B cell (primary cell): ENCODE measurements at regions of chr4 and their contacts with region 1.

Region 1: DNA sequence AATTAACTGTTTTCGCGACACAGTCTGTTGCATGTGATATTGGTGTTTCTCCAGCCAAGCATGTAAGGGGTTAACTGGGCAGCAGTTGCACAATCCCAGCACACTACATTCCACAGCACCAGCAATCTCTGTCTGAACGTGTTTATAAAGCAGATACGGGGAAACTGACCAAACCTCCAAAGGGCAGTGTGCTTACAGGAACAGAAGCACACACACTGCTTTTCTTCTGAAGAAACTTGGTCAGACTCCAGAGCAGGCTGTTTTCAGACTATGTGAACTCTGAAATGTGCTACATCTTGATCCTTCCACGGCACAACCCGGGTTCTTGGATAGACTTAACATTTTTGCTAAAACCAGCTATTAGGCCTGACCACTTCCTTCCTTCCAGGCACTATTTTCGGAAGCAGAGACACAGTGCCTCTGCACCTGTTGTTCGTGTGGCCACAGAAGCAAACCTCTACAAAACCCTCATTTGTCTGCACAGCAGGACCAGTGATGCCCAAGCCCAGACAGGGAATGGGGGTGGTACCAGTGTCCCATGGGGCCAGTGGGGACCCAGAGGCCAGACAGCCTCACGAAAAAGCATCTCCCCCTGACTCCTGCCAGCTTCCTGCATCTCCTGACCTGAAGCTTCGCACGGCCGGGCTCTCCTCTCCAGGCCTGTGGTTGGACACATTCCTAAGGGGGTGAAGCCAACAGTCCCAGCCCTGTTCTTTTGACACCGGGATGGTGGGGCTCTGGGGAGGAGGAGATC is 90.1 kb downstream of the IRF2 start:
- DNase-seq: peak; percentile 71
- ATAC-seq: peak; percentile 57
- H3K4me3 ChIP-seq: peak overlapping the region; percentile 30 to 59 (median 50)
- H3K4me3 Mint-ChIP-seq: peak overlapping the region; percentile 81
- H3K27ac ChIP-seq: peak overlapping the region; percentile 60 to 76
- H3K27ac Mint-ChIP-seq: peak overlapping the region; percentile 85
- H3K4me1 ChIP-seq: peaks cover 79 to 88% of the 10 kb centered on the region in 2 donors
- H3K4me1 Mint-ChIP-seq: peaks cover 85% of the 10 kb centered on the region
- H3K27me3 ChIP-seq: no peaks in the 10 kb centered on the region
- H3K27me3 Mint-ChIP-seq: no peaks in the 10 kb centered on the region
- CTCF ChIP-seq: no peak

Region 2: GRCh38 chr4:184282251-184282713 is 102.0 kb before region 1 on chr4:
- CTCF ChIA-PET with region 1: no interaction called
- POLR2A ChIA-PET with region 1: interaction called, 7 read pairs
- intact Hi-C with region 1: loop called (anchors 5 kb)
- DNase-seq: peak; percentile 62
- ATAC-seq: peak; percentile 72
- H3K4me3 ChIP-seq: no peak overlapping the region
- H3K4me3 Mint-ChIP-seq: peak overlapping the region; percentile 77
- H3K27ac ChIP-seq: peak overlapping the region; percentile 28 to 73
- H3K27ac Mint-ChIP-seq: peak overlapping the region; percentile 90
- H3K4me1 ChIP-seq: peaks cover 48% of the 10 kb centered on the region in 2 donors
- H3K4me1 Mint-ChIP-seq: peaks cover 58% of the 10 kb centered on the region
- H3K27me3 ChIP-seq: no peaks in the 10 kb centered on the region
- H3K27me3 Mint-ChIP-seq: no peaks in the 10 kb centered on the region
- CTCF ChIP-seq: peak; percentile 34

Region 3: DNA sequence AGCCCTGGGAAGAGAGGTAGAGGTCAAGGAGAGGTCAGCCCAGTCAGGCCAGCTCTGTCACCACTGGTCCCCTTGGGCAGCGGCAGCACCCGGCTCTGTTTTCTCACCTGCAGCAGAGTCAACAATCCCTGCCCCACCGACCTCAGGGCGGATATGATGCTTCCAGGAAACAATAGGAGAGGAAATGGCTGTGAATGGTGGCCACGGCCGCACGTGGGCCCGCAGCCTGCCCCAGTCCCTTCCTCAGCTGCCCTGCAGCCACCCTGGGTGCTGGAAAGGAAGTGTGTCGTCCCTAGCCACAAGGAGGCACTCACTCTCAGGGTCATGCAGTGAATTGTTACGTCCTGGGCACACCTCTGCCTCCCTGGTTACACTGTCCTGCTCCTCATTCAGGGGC is 74.1 kb before region 1 on chr4:
- CTCF ChIA-PET with region 1: interaction called, 7 read pairs
- POLR2A ChIA-PET with region 1: interaction called, 3 read pairs
- intact Hi-C with region 1: loop called (anchors 1 kb)
- DNase-seq: peak; percentile 71
- ATAC-seq: peak; percentile 21
- H3K4me3 ChIP-seq: no peak overlapping the region
- H3K4me3 Mint-ChIP-seq: peak overlapping the region; percentile 29
- H3K27ac ChIP-seq: no peak overlapping the region
- H3K27ac Mint-ChIP-seq: peak overlapping the region; percentile 56
- H3K4me1 ChIP-seq: peaks cover 46 to 48% of the 10 kb centered on the region in 2 donors
- H3K4me1 Mint-ChIP-seq: peaks cover 60% of the 10 kb centered on the region
- H3K27me3 ChIP-seq: no peaks in the 10 kb centered on the region
- H3K27me3 Mint-ChIP-seq: no peaks in the 10 kb centered on the region
- CTCF ChIP-seq: peak; percentile 58

Region 4: DNA sequence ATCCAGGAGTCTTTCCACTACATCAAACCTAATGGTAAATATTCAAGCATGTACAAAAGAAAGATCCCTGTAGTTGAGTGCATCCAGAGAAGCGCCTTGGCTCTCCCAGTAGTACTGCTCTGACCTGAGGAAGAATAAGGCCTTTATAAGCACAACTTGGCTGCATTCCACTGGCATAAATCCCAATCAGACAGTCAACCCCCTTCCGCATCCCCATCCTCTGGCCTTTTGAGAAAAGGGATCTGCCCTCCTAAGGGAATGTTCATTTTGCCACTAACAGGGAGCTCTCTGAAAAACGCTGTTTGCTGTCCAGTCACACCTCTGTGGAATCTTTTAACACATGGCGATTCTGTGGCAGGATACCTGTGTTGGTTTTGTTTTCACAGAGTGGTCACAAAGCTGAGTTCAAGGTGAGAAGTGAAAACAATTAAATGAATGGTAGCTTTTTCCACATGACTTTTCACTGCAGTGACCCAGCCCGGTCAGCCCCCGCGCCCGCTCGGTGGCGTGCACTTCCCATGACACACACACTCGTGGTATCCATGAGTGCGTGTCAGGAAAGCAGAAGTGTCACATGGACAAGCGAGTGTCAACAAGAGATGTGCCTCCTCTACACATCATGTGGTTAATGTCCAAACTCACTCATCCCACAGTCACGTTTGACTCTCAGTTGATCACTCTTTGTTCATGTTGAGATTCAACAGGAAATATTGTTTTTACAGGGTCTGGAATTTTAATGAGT is 54.4 kb before region 1 on chr4:
- CTCF ChIA-PET with region 1: interaction called, 13 read pairs
- POLR2A ChIA-PET with region 1: no interaction called
- intact Hi-C with region 1: loop called (anchors 2 kb)
- DNase-seq: peak; percentile 89
- ATAC-seq: peak; percentile 28
- H3K4me3 ChIP-seq: no peak overlapping the region
- H3K4me3 Mint-ChIP-seq: peak overlapping the region; percentile 75
- H3K27ac ChIP-seq: peak overlapping the region; percentile 89 to 91
- H3K27ac Mint-ChIP-seq: peak overlapping the region; percentile 96
- H3K4me1 ChIP-seq: peaks cover 63 to 65% of the 10 kb centered on the region in 2 donors
- H3K4me1 Mint-ChIP-seq: peaks cover 67% of the 10 kb centered on the region
- H3K27me3 ChIP-seq: no peaks in the 10 kb centered on the region
- H3K27me3 Mint-ChIP-seq: no peaks in the 10 kb centered on the region
- CTCF ChIP-seq: no peak

Region 5: GRCh38 chr4:184343502-184344177 is 40.6 kb before region 1 on chr4:
- CTCF ChIA-PET with region 1: interaction called, 5 read pairs
- POLR2A ChIA-PET with region 1: interaction called, 3 read pairs
- intact Hi-C with region 1: loop called (anchors 2 kb)
- DNase-seq: peak; percentile 67
- ATAC-seq: peak; percentile 37
- H3K4me3 ChIP-seq: peak overlapping the region; percentile 55 to 70 (median 62)
- H3K4me3 Mint-ChIP-seq: peak overlapping the region; percentile 92
- H3K27ac ChIP-seq: peak overlapping the region; percentile 54 to 75
- H3K27ac Mint-ChIP-seq: peak overlapping the region; percentile 87
- H3K4me1 ChIP-seq: peaks cover 66 to 71% of the 10 kb centered on the region in 2 donors
- H3K4me1 Mint-ChIP-seq: peaks cover 68% of the 10 kb centered on the region
- H3K27me3 ChIP-seq: no peaks in the 10 kb centered on the region
- H3K27me3 Mint-ChIP-seq: no peaks in the 10 kb centered on the region
- CTCF ChIP-seq: no peak

Region 6: DNA sequence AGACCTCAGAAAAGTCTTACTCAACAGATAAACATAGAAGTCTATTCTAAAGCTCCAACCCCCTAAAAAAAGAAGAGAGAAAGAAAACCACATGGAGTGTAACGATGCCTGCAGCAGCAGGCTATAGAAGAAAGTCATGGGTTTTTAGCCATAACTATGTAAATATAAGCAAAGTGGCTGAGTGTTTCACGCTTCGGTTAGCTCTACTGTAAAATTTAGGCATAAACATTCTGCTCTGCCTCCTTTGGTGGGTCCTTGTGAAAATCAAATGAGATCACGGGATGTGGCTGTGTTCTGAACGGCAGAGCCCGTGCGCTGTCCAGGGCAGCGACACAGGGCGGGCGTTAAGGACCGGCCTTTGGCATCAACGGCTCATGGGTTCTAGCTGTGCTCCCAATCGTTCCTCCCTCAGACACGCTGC is 11.7 kb after region 1 on chr4:
- CTCF ChIA-PET with region 1: interaction called, 8 read pairs
- POLR2A ChIA-PET with region 1: interaction called, 4 read pairs
- intact Hi-C with region 1: loop called (anchors 1 kb)
- DNase-seq: peak; percentile 87
- ATAC-seq: peak; percentile 90
- H3K4me3 ChIP-seq: peak overlapping the region in 4 of 5 experiments; percentile 10 to 44 (median 15)
- H3K4me3 Mint-ChIP-seq: peak overlapping the region; percentile 89
- H3K27ac ChIP-seq: peak overlapping the region; percentile 9 to 79
- H3K27ac Mint-ChIP-seq: peak overlapping the region; percentile 95
- H3K4me1 ChIP-seq: peaks cover 27 to 35% of the 10 kb centered on the region in 2 donors
- H3K4me1 Mint-ChIP-seq: peaks cover 44% of the 10 kb centered on the region
- H3K27me3 ChIP-seq: no peaks in the 10 kb centered on the region
- H3K27me3 Mint-ChIP-seq: no peaks in the 10 kb centered on the region
- CTCF ChIP-seq: peak; percentile 15

Region 7: DNA sequence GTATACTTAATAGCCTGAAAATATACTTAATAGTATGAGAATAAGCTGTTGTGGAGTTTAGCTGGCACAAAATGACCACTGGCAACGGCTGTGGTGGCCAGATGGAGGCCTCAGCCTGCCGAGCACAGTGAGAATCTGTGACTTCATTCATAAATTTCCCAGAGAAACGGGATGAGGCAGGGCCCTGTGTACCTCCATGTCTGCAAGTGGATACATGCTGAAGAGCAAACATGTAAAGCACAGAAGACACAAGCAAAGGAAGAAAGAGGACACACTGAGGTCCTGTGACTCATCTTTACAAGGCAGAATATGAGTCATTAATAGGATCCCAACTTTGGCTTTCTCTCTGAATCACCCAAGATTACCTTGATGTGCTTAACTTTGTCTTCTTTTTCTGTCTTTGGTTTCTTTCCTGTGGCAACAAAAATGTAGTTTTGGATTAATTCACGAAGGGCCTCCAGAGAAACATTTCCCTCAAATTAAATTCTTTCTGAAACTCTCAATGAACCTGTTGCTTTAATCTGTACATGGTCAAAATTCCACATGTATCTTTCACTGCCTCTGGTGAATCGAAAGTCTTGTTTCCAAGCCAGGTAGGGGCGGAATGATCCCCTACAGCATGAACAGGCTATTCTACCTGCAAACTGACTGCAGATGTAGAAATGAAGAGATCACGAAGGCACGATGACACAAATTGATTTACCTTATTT is 33.7 kb after region 1 on chr4:
- CTCF ChIA-PET with region 1: interaction called, 3 read pairs
- POLR2A ChIA-PET with region 1: no interaction called
- intact Hi-C with region 1: loop called (anchors 5 kb)
- DNase-seq: peak; percentile 16
- ATAC-seq: peak; percentile 43
- H3K4me3 ChIP-seq: peak overlapping the region in 2 of 5 experiments; percentile 12 to 55
- H3K4me3 Mint-ChIP-seq: peak overlapping the region; percentile 48
- H3K27ac ChIP-seq: peak overlapping the region; percentile 79 to 84
- H3K27ac Mint-ChIP-seq: peak overlapping the region; percentile 91
- H3K4me1 ChIP-seq: peaks cover 45 to 57% of the 10 kb centered on the region in 2 donors
- H3K4me1 Mint-ChIP-seq: peaks cover 78% of the 10 kb centered on the region
- H3K27me3 ChIP-seq: no peaks in the 10 kb centered on the region
- H3K27me3 Mint-ChIP-seq: no peaks in the 10 kb centered on the region
- CTCF ChIP-seq: no peak